ENCODE measurements at regions of chr3 and their contacts with region 1.

Region 1: DNA sequence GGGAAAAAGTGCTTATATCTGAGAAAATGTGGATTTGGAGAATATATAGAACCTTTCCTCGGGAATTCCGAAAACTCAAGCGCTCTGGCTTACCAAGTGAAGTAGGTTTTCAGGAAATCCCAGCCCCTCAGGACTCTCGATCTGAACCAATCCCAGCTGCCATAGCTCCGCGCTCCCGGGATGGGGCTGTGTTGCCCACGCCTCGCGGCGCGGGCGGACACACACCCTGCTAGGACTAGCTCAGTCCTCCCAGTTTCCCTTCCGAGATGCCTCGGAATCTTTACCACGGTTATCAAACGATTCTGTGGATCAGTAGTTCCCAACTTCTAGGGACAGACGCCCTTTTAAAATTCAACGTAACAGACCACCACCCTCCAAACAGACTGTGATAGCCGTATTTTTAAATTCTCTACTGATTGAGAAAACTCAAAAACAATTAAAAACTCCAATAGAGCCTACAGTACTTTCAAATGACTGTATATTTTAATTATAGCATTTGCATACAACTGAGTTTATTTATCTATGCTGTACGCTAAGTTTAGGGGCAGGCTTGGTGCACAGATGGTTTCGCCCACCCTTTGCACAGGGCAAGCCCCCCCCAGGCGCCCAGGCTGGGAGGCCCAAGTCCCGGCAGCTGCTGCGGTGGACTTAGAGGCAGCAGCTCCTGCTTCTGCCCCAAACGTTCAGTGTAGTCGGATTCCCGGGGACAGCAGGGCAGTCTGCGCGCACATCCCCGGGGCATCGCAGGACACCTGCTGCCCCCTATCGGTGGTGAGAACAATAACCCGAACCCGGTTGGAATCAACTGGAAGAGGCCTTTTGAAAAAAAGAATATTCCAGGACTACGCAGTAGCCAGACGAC is 52.3 kb downstream of the CCDC54 start:
- DNase-seq: peak; percentile 59
- H3K4me3 ChIP-seq: peak overlapping the region; percentile 56
- CTCF ChIP-seq: peak; percentile 84

Region 2: DNA sequence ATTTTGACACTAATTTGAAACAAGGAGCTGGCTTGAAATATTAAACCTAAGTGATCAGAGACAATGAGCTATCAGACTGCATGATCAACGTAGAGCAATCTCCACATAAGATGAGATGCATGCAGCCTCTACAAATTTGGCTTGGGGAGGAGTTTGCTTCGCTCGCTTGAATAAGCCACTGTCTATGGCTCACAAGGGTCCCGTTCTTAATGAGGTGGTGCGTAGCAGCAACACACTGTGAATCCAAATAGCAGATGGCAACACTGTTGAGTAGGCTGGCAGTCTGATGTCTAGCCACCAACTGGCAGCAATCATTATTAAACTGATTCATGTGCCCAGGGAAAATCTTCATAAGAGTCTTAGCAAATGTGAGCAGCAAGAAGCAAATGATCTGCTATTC is 177.7 kb before region 1 on chr3:
- CTCF ChIA-PET with region 1: interaction called, 30 read pairs
- POLR2A ChIA-PET with region 1: no interaction called
- DNase-seq: no peak
- H3K4me3 ChIP-seq: no peak overlapping the region
- CTCF ChIP-seq: no peak

Region 3: GRCh38 chr3:107258300-107258699 is 171.3 kb before region 1 on chr3:
- CTCF ChIA-PET with region 1: interaction called, 30 read pairs
- POLR2A ChIA-PET with region 1: no interaction called
- DNase-seq: no peak
- H3K4me3 ChIP-seq: no peak overlapping the region
- CTCF ChIP-seq: no peak

Region 4: GRCh38 chr3:107404727-107405469 is 24.7 kb before region 1 on chr3:
- CTCF ChIA-PET with region 1: interaction called, 33 read pairs
- POLR2A ChIA-PET with region 1: interaction called, 4 read pairs
- DNase-seq: peak; percentile 73
- H3K4me3 ChIP-seq: no peak overlapping the region; the same call in 1 of the 2 replicates
- CTCF ChIP-seq: no peak

Region 5: GRCh38 chr3:107414325-107414964 is 15.1 kb before region 1 on chr3:
- CTCF ChIA-PET with region 1: interaction called, 89 read pairs
- POLR2A ChIA-PET with region 1: no interaction called
- DNase-seq: no peak
- H3K4me3 ChIP-seq: no peak overlapping the region
- CTCF ChIP-seq: no peak

Region 6: DNA sequence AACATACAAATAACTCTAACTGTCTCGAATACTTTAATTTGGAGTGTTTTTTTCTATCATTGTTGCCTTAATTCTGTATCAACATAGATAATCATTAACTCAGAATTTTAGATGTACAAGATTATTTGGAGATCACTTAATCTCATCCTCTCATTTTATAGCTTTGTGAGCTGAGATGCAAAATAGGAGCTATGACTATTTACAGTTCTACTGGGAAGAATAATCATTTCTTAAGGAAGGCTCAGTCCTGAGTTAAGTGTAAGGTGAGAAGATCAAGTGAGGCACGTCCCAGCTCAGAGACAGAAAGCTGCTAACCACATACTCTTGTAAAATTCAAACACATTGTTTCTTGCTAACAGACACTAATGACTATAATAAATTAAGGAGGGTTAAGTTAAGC is 13.9 kb after region 1 on chr3:
- CTCF ChIA-PET with region 1: interaction called, 14 read pairs
- POLR2A ChIA-PET with region 1: no interaction called
- DNase-seq: no peak
- H3K4me3 ChIP-seq: no peak overlapping the region
- CTCF ChIP-seq: no peak

Region 7: GRCh38 chr3:107452436-107452835 is 22.9 kb after region 1 on chr3:
- CTCF ChIA-PET with region 1: interaction called, 30 read pairs
- POLR2A ChIA-PET with region 1: no interaction called
- DNase-seq: no peak
- H3K4me3 ChIP-seq: no peak overlapping the region
- CTCF ChIP-seq: no peak

Region 8: GRCh38 chr3:107612664-107613084 is 183.1 kb after region 1 on chr3:
- CTCF ChIA-PET with region 1: no interaction called
- POLR2A ChIA-PET with region 1: no interaction called
- DNase-seq: no peak
- H3K4me3 ChIP-seq: no peak overlapping the region
- CTCF ChIP-seq: no peak